CD4-positive, alpha-beta T cell (primary cell): ENCODE measurements at regions of chr15 and their contacts with region 1.

Region 1: DNA sequence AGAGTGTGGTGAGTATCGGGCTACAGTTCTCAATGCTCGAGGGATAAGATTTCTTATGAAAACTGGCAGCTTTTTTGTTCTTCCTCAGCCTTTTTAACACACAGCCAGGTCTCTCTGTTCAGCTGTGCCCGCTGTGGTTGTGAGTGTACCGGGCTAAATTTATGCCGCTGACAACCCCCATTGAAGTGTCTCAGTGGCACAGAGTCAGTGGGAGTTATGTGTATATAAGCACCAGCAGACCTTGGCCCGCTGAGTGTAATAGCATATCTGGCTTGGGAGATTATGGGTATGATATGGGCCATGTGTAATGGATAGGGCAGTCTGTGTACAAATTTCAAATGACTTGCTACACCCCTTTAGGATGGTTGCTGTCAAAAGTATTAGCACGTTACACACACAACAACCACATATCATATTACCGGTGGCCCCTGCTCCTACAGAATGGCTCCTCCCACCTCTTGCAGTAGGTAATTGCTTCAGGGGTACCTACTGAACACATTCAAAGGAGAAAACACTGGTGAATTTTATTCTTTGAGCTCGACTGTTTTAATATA is 26.9 kb upstream of the NR2F2 start:
- DNase-seq: no peak
- ATAC-seq: no peak
- H3K4me3 ChIP-seq: no peak overlapping the region
- H3K4me3 Mint-ChIP-seq: no peak overlapping the region
- H3K27ac ChIP-seq: no peak overlapping the region
- H3K27ac Mint-ChIP-seq: no peak overlapping the region
- H3K4me1 ChIP-seq: no peaks in the 10 kb centered on the region
- H3K4me1 Mint-ChIP-seq: no peaks in the 10 kb centered on the region
- H3K27me3 ChIP-seq: no peaks in the 10 kb centered on the region
- H3K27me3 Mint-ChIP-seq: peaks cover 13% of the 10 kb centered on the region
- CTCF ChIP-seq: no peak

Region 2: GRCh38 chr15:95839367-95839782 is 464.2 kb before region 1 on chr15:
- CTCF ChIA-PET with region 1: no interaction called
- POLR2A ChIA-PET with region 1: no interaction called
- intact Hi-C with region 1: loop called in 1 of 2 experiments (anchors 10 kb)
- DNase-seq: peak in 3 of 14 experiments; percentile 18 to 68 (median 27)
- ATAC-seq: peak; percentile 34
- H3K4me3 ChIP-seq: no peak overlapping the region
- H3K4me3 Mint-ChIP-seq: no peak overlapping the region
- H3K27ac ChIP-seq: peak overlapping the region in 1 of 2 donors; percentile 47
- H3K27ac Mint-ChIP-seq: peak overlapping the region; percentile 55
- H3K4me1 ChIP-seq: peaks cover 15% of the 10 kb centered on the region
- H3K4me1 Mint-ChIP-seq: peaks cover 22% of the 10 kb centered on the region
- H3K27me3 ChIP-seq: no peaks in the 10 kb centered on the region
- H3K27me3 Mint-ChIP-seq: no peaks in the 10 kb centered on the region
- CTCF ChIP-seq: no peak

Region 3: GRCh38 chr15:96160269-96160668 is 143.3 kb before region 1 on chr15:
- CTCF ChIA-PET with region 1: no interaction called
- POLR2A ChIA-PET with region 1: no interaction called
- intact Hi-C with region 1: no loop called
- DNase-seq: no peak
- ATAC-seq: no peak
- H3K4me3 ChIP-seq: no peak overlapping the region
- H3K4me3 Mint-ChIP-seq: no peak overlapping the region
- H3K27ac ChIP-seq: no peak overlapping the region
- H3K27ac Mint-ChIP-seq: no peak overlapping the region
- H3K4me1 ChIP-seq: no peaks in the 10 kb centered on the region
- H3K4me1 Mint-ChIP-seq: no peaks in the 10 kb centered on the region
- H3K27me3 ChIP-seq: no peaks in the 10 kb centered on the region
- H3K27me3 Mint-ChIP-seq: peaks cover 15% of the 10 kb centered on the region
- CTCF ChIP-seq: no peak

Region 4: DNA sequence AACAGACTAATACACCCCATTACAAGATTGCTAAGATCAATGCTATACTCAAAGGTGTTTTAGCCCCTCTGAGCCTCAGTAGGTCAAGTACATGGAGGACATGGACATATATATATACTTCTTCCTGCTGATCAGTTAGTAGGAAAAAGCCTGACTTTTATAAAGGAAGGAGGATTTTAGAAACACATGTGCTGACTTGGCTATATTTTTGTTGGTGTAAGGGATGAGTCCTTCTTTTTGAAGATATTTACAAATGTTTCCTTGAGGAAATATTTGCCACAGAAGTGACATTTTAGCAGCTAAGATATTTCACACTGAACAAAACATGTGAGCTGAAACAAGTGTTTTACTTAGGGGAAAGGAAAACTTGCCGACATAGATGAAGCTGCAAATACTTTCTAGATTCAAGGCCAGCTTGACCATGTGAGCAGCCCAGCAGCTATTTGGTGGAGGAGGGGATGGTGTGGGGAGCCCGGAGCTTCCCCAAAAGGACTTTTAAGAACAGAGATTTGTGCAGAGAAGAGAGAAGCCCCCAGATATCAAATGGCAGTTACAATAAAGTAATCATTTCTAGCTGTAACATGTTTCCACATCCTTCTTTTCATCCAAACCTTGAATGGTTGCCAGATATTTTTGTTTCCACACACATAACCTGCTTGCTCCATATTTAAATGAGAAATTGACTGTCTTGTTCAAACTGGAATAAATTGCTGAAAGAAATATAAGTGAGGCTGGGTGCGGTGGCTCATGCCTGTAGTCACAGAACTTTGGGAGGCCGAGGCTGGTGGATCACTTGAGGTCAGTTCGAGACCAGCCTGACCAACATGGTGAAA is 84.7 kb before region 1 on chr15:
- CTCF ChIA-PET with region 1: no interaction called
- POLR2A ChIA-PET with region 1: no interaction called
- intact Hi-C with region 1: no loop called
- DNase-seq: no peak
- ATAC-seq: no peak
- H3K4me3 ChIP-seq: no peak overlapping the region
- H3K4me3 Mint-ChIP-seq: no peak overlapping the region
- H3K27ac ChIP-seq: no peak overlapping the region
- H3K27ac Mint-ChIP-seq: no peak overlapping the region
- H3K4me1 ChIP-seq: no peaks in the 10 kb centered on the region
- H3K4me1 Mint-ChIP-seq: no peaks in the 10 kb centered on the region
- H3K27me3 ChIP-seq: no peaks in the 10 kb centered on the region
- H3K27me3 Mint-ChIP-seq: peaks cover 23% of the 10 kb centered on the region
- CTCF ChIP-seq: no peak